Common myeloid progenitor, CD34-positive (primary cell): ENCODE measurements at regions of chr10 and their contacts with region 1.

Region 1: GRCh38 chr10:69901628-69902505 is 100.2 kb downstream of the COL13A1 start:
- DNase-seq: peak; percentile 21 to 40 (median 30)
- H3K4me3 ChIP-seq: no peak overlapping the region
- H3K27ac ChIP-seq: no peak overlapping the region
- H3K4me1 ChIP-seq: no peaks in the 10 kb centered on the region
- H3K27me3 ChIP-seq: peaks cover 0 to 1% (median 0%) of the 10 kb centered on the region in 5 experiments

Region 2: DNA sequence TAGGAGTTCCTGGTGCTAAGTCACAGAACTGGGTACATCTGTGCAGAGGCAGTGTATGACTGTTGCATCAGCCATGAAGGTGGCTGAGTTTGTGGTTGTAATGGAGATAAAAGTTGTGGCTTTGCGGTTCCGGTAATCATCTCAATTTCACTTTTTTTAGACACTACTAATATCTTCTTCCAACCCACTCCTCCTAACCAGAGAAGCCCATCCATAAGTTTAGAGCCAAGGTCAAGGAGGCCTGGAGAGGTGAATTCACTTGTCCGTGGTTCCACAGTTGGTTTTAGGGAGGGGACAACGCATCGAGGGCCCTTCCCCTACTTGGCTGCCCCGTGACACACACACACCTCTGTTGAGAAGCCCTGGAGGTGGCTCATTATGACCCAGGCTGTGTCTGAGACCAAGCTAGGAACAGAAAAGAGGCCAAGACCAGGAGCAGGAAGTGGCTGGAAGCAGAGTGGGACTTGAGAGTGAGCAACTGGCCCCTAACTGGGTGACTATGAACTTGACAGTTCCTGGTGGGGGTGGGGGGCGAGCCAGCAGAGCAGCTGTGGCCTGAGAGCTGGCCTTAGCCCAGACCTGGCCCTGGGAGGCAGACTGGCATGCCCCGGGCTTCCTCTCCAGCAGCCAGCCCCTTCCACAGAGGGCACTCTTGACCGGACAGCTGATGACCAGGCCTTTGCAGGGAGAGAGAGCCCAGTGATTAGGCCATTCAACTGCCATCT is 166.9 kb before region 1 on chr10:
- CTCF ChIA-PET with region 1: no interaction called
- POLR2A ChIA-PET with region 1: no interaction called
- DNase-seq: peak in 2 of 3 donors; percentile 21 to 27
- H3K4me3 ChIP-seq: no peak overlapping the region
- H3K27ac ChIP-seq: no peak overlapping the region
- H3K4me1 ChIP-seq: peaks cover 0 to 4% (median 0%) of the 10 kb centered on the region in 4 experiments
- H3K27me3 ChIP-seq: peaks cover 0 to 5% (median 0%) of the 10 kb centered on the region in 5 experiments

Region 3: DNA sequence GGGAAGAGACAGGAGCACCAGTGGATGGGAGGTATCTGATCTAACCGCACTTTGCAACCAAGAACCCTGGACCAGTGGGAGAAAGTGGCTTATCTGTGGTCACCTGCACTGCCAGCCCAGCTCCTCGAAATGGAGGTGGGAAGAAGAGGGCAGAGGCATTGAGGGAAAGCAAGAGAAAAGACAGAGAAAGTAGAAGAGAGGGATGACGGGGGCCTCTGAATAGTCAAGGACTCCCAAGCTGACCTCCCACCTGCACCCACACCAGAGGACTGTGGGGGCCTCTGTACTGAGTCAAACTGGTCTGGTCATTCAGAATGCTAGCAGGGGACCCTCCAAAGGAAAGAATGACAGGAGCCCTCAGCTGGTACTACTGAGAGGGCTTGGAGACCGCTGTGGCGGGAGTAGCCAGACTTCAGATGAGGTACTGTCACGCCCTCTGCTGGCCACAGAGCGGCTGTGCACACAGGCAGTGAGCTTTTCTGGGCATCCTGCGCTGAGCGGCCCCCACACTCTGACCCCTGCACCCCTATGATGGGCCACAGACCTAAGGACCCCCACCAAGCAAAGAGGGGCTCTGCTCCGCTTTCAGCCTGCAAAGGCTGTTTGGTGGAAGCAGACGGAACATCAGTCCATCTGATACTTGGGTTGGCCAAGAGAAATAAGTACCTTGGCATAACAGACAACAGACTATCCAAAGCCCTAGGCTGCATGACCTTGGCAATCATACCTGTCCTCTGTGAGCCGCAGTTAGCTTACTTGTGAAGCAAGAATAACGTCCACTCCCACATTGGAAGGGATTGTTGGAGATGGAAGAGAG is 12.7 kb after region 1 on chr10:
- CTCF ChIA-PET with region 1: interaction called, 20 read pairs
- POLR2A ChIA-PET with region 1: no interaction called
- DNase-seq: peak; percentile 44 to 78 (median 68)
- H3K4me3 ChIP-seq: no peak overlapping the region
- H3K27ac ChIP-seq: no peak overlapping the region
- H3K4me1 ChIP-seq: peaks cover 0 to 4% (median 0%) of the 10 kb centered on the region in 4 experiments
- H3K27me3 ChIP-seq: no peaks in the 10 kb centered on the region